Natural killer cell (primary cell): ENCODE measurements at regions of chr11 and their contacts with region 1.

Region 1: DNA sequence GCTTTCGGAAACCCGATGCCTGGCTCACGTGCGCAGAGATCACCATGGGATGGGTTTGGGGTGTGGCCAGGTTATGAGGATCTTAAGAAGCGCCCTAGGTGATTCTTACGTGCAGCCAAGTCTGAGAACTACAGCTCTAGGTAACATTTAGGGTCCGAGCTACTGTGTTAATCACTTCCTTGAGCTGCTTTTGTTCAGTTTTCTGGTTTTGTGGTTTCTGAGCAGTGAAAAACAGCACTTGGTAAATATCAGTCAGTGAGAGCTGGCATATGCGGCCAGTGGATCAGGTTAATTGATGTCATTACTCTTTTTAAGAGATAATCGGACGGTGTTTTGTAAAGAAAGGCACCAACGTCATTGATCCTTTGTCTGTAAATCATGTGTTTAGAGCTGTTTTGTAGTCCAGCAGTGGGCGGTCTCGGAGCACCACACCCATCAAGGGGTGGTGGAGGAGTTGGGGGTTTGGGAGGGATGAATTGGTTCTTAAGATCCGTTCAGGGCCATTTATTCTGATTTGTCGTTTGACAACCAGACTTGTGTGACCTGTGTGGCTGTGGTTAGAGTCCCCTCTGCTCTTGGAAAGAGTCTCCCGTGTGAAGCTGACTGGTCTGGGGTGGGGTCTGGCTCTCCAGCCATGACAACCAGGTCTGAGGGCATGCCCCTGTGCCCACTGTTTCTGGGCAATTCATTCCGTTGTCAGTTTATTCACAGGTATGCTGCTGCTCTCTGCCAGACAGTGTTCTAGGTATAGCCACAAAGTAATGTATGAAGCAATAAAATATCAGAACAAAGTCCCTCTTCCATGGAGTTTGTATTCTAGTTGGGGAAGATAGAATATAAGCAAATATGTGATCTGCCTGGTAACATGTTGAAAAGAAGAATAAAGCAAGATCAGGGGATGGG is 61.9 kb upstream of the SORL1-AS1 start:
- DNase-seq: peak; percentile 22 to 40
- ATAC-seq: peak; percentile 68 to 79 (median 73)
- H3K4me3 ChIP-seq: no peak overlapping the region
- H3K4me3 Mint-ChIP-seq: peak overlapping the region; percentile 64
- H3K27ac ChIP-seq: peak overlapping the region; percentile 87
- H3K27ac Mint-ChIP-seq: peak overlapping the region; percentile 95
- H3K4me1 ChIP-seq: peaks cover 46% of the 10 kb centered on the region
- H3K4me1 Mint-ChIP-seq: peaks cover 72 to 80% of the 10 kb centered on the region in 2 donors
- H3K27me3 ChIP-seq: no peaks in the 10 kb centered on the region
- H3K27me3 Mint-ChIP-seq: no peaks in the 10 kb centered on the region
- CTCF ChIP-seq: no peak

Region 2: DNA sequence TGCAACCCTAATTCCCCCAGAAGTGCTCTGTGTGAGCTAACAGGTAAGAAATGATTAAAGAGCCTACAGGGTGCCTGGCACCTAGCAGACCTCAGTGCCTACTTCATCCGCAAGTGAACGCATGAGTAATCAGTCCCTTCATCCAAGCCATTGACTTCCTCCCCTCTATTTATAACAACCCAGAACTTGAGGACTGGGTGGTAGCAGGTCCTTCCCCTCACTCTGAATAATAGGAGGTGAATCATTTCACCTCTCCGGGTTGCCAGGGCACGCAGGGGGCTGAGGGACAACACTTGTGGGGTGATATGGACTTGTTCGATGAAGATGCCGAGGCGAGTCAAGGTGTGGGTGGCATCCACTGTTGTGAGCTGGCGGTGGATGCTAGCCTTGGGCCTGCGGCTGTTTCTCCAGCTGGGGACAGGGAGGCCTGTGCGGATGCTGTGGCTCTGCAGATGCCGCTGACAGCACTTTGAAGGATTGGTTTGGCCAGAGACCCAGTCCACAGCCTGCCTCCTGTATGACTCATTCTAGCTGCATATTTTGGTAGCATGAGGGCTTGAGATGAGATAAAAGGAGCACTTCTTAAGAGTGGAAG is 50.2 kb before region 1 on chr11:
- intact Hi-C with region 1: loop called (anchors 2 kb)
- DNase-seq: peak; percentile 76 to 77
- ATAC-seq: peak; percentile 70 to 73 (median 70)
- H3K4me3 ChIP-seq: no peak overlapping the region
- H3K4me3 Mint-ChIP-seq: peak overlapping the region; percentile 86
- H3K27ac ChIP-seq: peak overlapping the region; percentile 68
- H3K27ac Mint-ChIP-seq: peak overlapping the region; percentile 98 to 99
- H3K4me1 ChIP-seq: peaks cover 92% of the 10 kb centered on the region
- H3K4me1 Mint-ChIP-seq: peaks cover 96 to 99% of the 10 kb centered on the region in 2 donors
- H3K27me3 ChIP-seq: no peaks in the 10 kb centered on the region
- H3K27me3 Mint-ChIP-seq: no peaks in the 10 kb centered on the region
- CTCF ChIP-seq: no peak

Region 3: DNA sequence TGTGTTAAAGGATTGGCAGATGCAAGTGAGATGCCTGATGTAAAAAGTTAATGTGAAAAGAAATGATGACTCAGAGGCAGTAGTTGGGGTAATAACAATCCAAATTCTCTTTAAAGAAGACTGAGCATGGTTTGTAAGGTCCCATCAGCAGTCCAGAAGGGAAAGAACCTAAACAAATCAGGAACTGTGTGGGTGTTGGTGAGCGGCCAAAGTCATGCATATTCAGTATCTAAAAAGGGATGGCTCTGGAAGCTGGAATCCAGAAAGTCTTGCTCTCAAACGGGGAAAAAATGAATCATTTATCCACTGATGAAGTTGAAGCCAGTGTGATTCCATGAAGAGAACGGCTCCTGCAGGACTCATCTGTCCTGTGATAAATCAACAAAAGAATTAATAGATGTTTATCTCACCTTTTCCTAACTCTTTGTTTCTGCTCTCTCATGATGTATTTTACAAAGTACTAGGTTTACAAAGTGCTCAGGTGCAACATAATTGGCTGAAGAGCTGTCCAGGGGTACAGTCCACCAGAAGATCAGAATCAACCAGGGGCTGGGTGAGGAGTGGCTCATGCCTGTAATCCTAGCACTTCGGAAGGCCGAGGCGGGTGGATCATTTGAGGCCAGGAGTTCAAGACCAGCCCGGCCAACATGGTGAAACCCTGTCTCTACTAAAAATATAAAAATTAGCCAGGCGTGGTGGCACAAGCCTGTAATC is 41.5 kb before region 1 on chr11:
- intact Hi-C with region 1: loop called (anchors 2 kb)
- DNase-seq: no peak
- ATAC-seq: peak in 1 of 3 donors; percentile 40
- H3K4me3 ChIP-seq: no peak overlapping the region
- H3K4me3 Mint-ChIP-seq: peak overlapping the region; percentile 88
- H3K27ac ChIP-seq: peak overlapping the region; percentile 73
- H3K27ac Mint-ChIP-seq: peak overlapping the region; percentile 98 to 99
- H3K4me1 ChIP-seq: peaks cover 84% of the 10 kb centered on the region
- H3K4me1 Mint-ChIP-seq: peaks cover 89 to 95% of the 10 kb centered on the region in 2 donors
- H3K27me3 ChIP-seq: no peaks in the 10 kb centered on the region
- H3K27me3 Mint-ChIP-seq: no peaks in the 10 kb centered on the region
- CTCF ChIP-seq: no peak

Region 4: DNA sequence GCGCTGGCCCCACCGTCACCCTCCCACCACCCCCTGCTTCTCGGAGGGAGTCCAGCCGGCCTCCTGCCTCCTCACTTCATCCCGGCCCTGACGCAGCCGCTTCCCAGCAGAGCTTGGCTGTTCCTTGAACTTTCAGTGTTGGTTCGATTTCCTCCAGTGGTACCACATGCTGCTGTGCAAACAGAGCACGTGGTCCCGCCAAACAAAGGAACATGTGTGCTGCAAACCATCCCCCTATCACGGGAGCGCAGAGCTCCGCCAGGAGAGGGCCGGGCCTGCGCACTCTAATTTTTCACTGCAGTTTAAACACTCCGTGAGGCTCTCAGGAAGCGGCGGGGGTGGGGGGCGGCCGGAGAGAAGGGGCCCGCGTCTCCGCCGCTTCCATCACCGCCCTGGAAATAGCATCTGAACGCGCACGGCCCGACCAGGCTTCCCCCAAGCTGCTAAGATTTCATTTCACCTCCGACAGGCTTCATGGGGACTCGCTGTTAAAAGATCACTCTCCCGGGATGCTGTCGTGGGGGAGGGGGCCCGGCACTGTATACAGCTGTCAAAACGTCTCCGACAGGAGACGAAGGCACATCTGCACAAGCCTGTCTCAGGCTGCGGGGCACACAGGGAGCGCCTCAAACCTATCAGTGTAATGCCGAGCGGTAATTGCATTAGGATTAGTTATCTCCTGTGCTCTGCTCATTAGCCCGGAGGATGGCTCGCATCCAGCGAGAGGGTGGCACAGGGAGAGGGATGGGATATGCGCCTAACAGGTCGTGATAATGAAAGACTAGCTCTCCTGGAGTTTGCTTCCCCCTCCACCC is 208.0 kb after region 1 on chr11:
- intact Hi-C with region 1: no loop called
- DNase-seq: no peak
- ATAC-seq: no peak
- H3K4me3 ChIP-seq: no peak overlapping the region
- H3K4me3 Mint-ChIP-seq: no peak overlapping the region
- H3K27ac ChIP-seq: no peak overlapping the region
- H3K27ac Mint-ChIP-seq: no peak overlapping the region
- H3K4me1 ChIP-seq: no peaks in the 10 kb centered on the region
- H3K4me1 Mint-ChIP-seq: no peaks in the 10 kb centered on the region
- H3K27me3 ChIP-seq: peaks cover 3% of the 10 kb centered on the region
- H3K27me3 Mint-ChIP-seq: peaks cover 23 to 27% of the 10 kb centered on the region in 2 donors
- CTCF ChIP-seq: no peak

Region 5: DNA sequence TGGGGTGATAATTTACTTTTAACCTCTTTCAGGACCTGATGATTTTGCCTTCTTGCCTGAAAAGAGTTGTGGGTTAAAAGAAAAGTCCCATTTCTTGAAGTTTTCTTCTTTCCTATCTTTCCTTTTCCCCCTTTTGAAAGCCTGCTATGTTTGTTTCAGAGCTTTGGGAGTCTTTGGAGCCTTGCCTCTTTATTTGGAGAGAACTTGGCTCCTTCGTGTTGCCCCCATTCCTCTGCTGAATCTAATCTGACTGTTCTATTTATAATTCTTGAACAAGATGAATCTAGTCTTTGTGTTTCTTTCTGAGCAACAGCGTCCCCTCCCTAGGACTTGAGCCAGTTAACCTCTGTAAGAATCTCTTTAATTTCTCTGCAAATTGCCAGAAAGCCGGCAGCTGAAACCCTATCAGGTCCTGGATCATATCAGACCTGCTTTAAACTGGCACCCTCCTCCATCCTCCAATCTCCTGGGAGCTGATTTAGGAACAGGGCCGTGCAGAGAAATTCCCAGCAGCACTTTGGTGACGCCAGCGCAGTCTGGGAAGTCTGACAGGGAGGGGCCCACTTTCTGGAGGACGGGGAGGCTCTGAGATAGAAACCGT is 227.2 kb after region 1 on chr11:
- intact Hi-C with region 1: no loop called
- DNase-seq: no peak
- ATAC-seq: no peak
- H3K4me3 ChIP-seq: no peak overlapping the region
- H3K4me3 Mint-ChIP-seq: no peak overlapping the region
- H3K27ac ChIP-seq: no peak overlapping the region
- H3K27ac Mint-ChIP-seq: no peak overlapping the region
- H3K4me1 ChIP-seq: no peaks in the 10 kb centered on the region
- H3K4me1 Mint-ChIP-seq: no peaks in the 10 kb centered on the region
- H3K27me3 ChIP-seq: no peaks in the 10 kb centered on the region
- H3K27me3 Mint-ChIP-seq: peaks cover 0 to 6% of the 10 kb centered on the region in 2 donors
- CTCF ChIP-seq: no peak